A549 (cell line): ENCODE measurements at regions of chr10 and their contacts with region 1.

Region 1: GRCh38 chr10:5293691-5294550 is 70.8 kb upstream of the UCN3 start:
- DNase-seq: peak; percentile 77 to 91
- ATAC-seq: peak; percentile 69 to 86
- H3K4me3 ChIP-seq: no peak overlapping the region
- H3K27ac ChIP-seq: peak overlapping the region; percentile 96 to 97
- H3K4me1 ChIP-seq: peaks cover 41% of the 10 kb centered on the region
- CTCF ChIP-seq: peak; percentile 72
- EP300 ChIP-seq: no peak
- POLR2A ChIP-seq: no peak
- RAD21 ChIP-seq: peak; percentile 62 to 72

Region 2: DNA sequence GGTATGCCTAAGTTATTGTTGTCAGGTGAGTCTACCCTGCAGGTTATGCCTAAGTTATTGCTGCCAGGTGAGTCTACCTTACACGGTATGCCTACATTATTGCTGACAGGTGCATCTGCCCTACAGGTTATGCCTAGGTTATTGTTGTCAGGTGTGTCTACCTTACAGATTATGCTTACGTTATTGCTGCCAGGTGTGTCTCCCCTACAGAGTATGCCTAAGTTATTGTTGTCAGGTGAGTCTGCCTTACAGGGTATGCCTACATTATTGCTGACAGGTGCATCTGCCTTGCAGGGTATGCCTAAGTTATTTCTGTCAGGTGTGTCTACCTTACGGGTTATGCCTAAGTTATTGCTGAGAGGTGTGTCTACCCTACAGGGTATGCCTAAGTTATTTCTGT is 33.1 kb before region 1 on chr10:
- CTCF ChIA-PET with region 1: no interaction called
- POLR2A ChIA-PET with region 1: no interaction called
- DNase-seq: no peak
- ATAC-seq: no peak; a peak in 1 of 6 replicates
- H3K4me3 ChIP-seq: no peak overlapping the region
- H3K27ac ChIP-seq: no peak overlapping the region
- H3K4me1 ChIP-seq: 0 out of 3 replicates have a peak, but pooled peaks cover 3% of the 10 kb centered on the region
- CTCF ChIP-seq: no peak
- EP300 ChIP-seq: no peak
- POLR2A ChIP-seq: no peak
- RAD21 ChIP-seq: no peak

Region 3: DNA sequence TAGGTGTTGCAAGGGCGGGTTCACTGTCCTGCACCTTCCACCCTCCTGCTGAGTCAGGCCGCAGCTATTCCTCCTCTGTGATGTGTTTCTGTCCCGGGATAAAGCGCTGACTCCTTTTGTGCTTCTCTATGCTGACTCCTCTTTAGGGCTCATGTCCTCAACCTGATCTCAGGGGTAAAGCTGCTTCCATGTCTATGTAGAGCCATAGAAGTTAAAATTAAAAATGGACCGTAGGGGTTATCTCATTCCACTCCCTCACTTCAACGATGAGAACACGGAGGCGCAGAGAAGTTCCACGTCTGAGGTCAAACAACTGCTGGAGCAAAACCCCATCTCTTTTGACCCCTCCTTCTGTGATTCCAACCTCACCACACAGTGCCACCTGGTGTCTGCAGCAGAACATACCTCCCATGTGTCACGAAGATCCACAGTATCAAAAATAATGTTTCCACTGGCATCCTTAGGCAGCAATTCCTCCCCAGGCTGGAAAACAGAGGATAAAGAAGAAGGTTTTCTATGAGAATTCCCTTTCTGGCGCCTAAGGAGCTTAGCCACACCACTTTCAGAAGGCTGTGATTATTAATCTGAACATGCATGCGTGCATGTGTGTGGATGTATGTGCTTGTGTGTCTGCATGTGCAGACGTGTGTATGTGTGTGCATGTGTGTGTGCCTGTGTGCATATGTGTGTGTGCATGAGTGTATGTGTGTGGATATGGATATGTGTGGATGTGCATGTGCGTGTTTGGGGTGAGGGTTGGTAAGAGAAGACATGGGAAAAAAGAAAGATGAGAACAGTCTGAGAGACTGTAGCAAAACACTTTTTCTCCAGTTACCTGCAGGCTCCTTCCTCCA is 10.4 kb before region 1 on chr10:
- CTCF ChIA-PET with region 1: interaction called, 43 read pairs
- POLR2A ChIA-PET with region 1: interaction called, 4 read pairs
- DNase-seq: peak; percentile 60 to 93
- ATAC-seq: peak; percentile 91 to 92
- H3K4me3 ChIP-seq: peak overlapping the region; percentile 1; the same call in 1 of the 3 replicates
- H3K27ac ChIP-seq: peak overlapping the region; percentile 96 to 97
- H3K4me1 ChIP-seq: peaks cover 41% of the 10 kb centered on the region
- CTCF ChIP-seq: peak; percentile 86
- EP300 ChIP-seq: 0 out of 5 replicates have a peak, but pooled peaks of 1 of the 2 experiments have one; percentile 27
- POLR2A ChIP-seq: no peak
- RAD21 ChIP-seq: peak; percentile 92 to 93